Activated CD8-positive, alpha-beta T cell treated with anti-CD3 and anti-CD28 coated beads for 36 hours (primary cell): ENCODE measurements at regions of chr22 and their contacts with region 1.

Region 1: GRCh38 chr22:21952586-21953571 is at the start of gene PPM1F:
- DNase-seq: peak; percentile 89
- ATAC-seq: peak; percentile 90
- H3K4me3 Mint-ChIP-seq: peak within 1 kb of the TSS; percentile 84
- H3K27ac Mint-ChIP-seq: peak within 1 kb of the TSS; percentile 75
- H3K4me1 Mint-ChIP-seq: peaks cover 13% of the 10 kb centered on the region
- H3K27me3 Mint-ChIP-seq: no peaks in the 10 kb centered on the region
- CTCF ChIP-seq: peak; percentile 78
- total RNA-seq, gene PPM1F: 18.2 to 18.8 TPM

Region 2: DNA sequence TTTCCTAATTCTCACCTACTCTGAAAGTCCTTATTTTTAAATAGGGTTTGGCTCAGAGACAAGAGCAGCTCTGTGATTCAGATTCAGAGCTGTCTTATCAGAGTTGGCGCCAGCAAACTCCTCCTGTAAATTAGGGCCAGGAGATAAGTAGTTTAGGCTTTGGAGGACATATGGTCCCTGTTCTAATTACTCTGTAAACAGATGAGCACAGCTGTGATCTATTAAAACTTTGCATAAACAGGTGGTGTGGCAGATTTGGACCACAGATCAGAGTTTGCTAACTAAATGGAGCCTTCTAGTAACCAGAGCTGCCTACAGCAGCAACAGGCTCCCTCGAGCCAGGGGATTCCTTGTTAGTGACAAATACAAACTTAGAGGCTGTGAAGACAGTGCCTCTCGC is 245.2 kb before region 1 on chr22:
- CTCF ChIA-PET with region 1: interaction called, 16 read pairs
- POLR2A ChIA-PET with region 1: no interaction called
- intact Hi-C with region 1: loop called (anchors 2 kb)
- DNase-seq: no peak
- ATAC-seq: no peak
- H3K4me3 Mint-ChIP-seq: no peak overlapping the region
- H3K27ac Mint-ChIP-seq: no peak overlapping the region
- H3K4me1 Mint-ChIP-seq: no peaks in the 10 kb centered on the region
- H3K27me3 Mint-ChIP-seq: no peaks in the 10 kb centered on the region
- CTCF ChIP-seq: no peak

Region 3: DNA sequence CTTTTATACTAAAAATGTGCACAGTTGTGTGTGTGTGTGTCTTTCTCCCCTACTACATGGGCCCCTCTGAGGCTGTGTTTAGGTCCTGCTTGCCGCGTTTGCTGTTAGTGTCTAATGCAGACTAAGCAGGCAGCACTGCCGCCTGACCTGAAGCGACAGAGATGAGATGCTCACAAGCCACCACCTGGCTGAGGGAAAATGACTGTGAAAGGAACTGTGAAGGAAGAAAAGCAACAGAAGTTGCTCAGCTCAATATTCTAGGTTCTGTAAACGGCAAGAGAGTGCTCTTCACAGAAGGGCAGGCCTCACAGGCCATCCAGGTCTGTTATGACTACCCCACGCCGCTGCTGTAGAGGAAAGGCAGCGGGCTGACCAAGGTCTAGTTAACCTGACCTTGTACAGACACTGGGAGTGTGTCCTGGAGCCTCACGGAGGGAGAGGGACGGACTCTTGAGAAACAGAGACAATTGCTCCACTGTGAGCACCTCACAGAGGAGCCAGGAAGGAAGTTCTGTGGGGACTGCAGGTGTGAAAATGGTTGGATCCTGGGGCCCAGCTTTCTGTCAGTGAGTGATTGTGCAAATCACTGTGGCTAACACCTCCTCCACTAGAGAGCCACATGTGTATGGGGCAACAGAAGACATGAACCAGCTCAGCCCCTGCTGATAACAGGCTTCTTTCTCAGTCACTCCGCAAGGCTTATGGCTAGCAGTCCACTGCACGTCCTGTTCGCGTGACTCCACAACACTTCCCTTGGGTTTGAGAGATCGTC is 186.0 kb before region 1 on chr22:
- CTCF ChIA-PET with region 1: interaction called, 10 read pairs
- POLR2A ChIA-PET with region 1: no interaction called
- intact Hi-C with region 1: no loop called
- DNase-seq: peak; percentile 90
- ATAC-seq: peak; percentile 83
- H3K4me3 Mint-ChIP-seq: peak overlapping the region; percentile 34
- H3K27ac Mint-ChIP-seq: peak overlapping the region; percentile 89
- H3K4me1 Mint-ChIP-seq: peaks cover 65% of the 10 kb centered on the region
- H3K27me3 Mint-ChIP-seq: no peaks in the 10 kb centered on the region
- CTCF ChIP-seq: no peak

Region 4: DNA sequence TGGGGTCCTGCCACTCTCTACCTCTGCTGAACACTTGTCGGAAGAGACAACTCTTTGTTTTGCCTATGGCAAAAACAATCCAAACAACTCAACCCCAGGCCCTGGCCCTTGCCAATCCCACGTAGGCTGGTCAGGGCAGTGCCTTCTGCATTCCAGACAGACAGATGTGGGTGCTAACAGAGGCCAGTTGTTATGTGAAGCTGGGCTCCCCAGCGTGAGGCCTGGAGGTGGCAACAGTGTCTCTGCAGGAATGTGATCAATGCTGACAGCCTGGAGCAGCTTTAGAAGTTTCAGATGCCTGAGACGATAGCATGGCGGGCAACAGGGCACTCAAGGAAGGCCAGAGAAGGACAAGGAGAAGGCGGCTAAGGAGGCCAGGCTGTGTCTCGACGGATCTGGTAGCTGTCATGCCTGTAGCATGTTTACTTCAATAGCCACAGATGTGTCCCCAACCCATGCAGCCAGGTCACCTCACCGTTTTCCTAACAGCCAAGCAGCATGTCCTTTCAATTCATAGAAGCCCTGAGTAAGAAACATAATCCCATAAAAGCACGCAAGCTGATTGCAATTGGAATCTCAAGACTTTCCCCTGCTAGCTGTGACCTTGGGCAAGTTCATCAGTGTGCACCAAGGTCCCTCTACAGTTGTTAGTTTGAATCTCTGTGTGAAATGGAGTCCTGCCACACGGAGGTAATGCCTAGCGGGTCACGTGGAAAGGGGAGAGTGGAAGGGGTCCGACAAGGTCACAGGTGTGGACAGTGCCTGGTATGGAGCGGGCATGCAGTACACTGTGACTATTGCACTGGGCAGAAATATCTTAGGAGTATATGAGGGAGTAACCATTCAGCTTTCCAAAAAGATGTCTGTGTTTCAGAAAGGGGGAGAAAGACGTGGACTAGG is 14.0 kb after region 1 on chr22:
- CTCF ChIA-PET with region 1: interaction called, 18 read pairs
- POLR2A ChIA-PET with region 1: interaction called, 3 read pairs
- intact Hi-C with region 1: no loop called
- DNase-seq: no peak
- ATAC-seq: no peak
- H3K4me3 Mint-ChIP-seq: no peak overlapping the region
- H3K27ac Mint-ChIP-seq: no peak overlapping the region
- H3K4me1 Mint-ChIP-seq: no peaks in the 10 kb centered on the region
- H3K27me3 Mint-ChIP-seq: no peaks in the 10 kb centered on the region
- CTCF ChIP-seq: no peak

Region 5: GRCh38 chr22:21982338-21982965 is 29.6 kb after region 1 on chr22 and contains the start of gene TOP3B:
- CTCF ChIA-PET with region 1: interaction called, 13 read pairs
- POLR2A ChIA-PET with region 1: interaction called, 5 read pairs
- intact Hi-C with region 1: no loop called
- DNase-seq: peak; percentile 86
- ATAC-seq: peak; percentile 97
- H3K4me3 Mint-ChIP-seq: peak within 1 kb of the TSS; percentile 88
- H3K27ac Mint-ChIP-seq: peak within 1 kb of the TSS; percentile 83
- H3K4me1 Mint-ChIP-seq: peaks cover 35% of the 10 kb centered on the region
- H3K27me3 Mint-ChIP-seq: no peaks in the 10 kb centered on the region
- CTCF ChIP-seq: no peak
- total RNA-seq, gene TOP3B: 33.6 to 34.0 TPM